ENCODE measurements at regions of chr1 and their contacts with region 1.

Region 1: DNA sequence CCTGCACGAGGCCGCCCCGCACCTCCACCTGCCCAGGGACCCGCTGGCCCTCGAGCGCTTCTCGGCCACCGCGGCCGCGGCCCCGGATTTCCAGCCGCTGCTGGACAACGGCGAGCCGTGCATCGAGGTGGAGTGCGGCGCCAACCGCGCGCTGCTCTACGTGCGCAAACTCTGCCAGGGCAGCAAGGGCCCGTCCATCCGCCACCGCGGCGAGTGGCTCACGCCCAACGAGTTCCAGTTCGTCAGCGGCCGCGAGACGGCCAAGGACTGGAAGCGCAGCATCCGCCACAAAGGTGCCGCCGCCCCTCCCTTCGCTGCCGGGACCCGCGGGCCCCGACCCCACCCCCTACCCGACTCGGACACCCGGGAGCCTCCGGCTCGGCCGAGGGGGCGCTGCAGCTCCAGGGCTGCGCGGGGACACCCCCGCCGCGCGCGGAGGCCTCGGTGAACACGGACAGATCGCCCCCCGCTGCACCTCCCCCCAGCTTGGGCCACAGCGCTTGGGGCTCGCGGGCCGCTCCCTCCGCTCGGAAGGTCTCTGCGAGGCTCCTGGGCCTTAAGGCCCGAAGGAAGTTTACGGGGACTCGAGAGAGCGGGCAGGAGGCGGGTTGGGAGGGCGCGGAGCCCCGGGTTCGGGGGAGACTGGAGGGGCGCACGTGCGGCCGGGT is 1.1 kb downstream of the SAMD11 start:
- DNase-seq: no peak
- ATAC-seq: no peak
- H3K4me3 ChIP-seq: peak overlapping the region; percentile 44
- H3K4me3 Mint-ChIP-seq: peak overlapping the region in 8 of 10 donors; percentile 8 to 72 (median 38)
- H3K27ac ChIP-seq: no peak overlapping the region
- H3K27ac Mint-ChIP-seq: no peak overlapping the region
- H3K4me1 ChIP-seq: peaks cover 7 to 21% of the 10 kb centered on the region in 2 donors
- H3K4me1 Mint-ChIP-seq: peaks cover 6 to 20% (median 15%) of the 10 kb centered on the region in 7 donors
- H3K27me3 ChIP-seq: peaks cover 7 to 27% of the 10 kb centered on the region in 2 donors
- H3K27me3 Mint-ChIP-seq: peaks cover 27 to 59% (median 37%) of the 10 kb centered on the region in 5 donors

Region 2: GRCh38 chr1:958823-959729 is 34.3 kb after region 1 on chr1 and contains the start of gene NOC2L:
- CTCF ChIA-PET with region 1: no interaction called
- POLR2A ChIA-PET with region 1: no interaction called
- intact Hi-C with region 1: loop called in 1 of 2 experiments (anchors 1 kb)
- DNase-seq: peak; percentile 84 to 97 (median 92)
- ATAC-seq: peak; percentile 96
- H3K4me3 ChIP-seq: peak within 1 kb of the TSS; percentile 87
- H3K4me3 Mint-ChIP-seq: peak within 1 kb of the TSS; percentile 83 to 95 (median 90)
- H3K27ac ChIP-seq: peak within 1 kb of the TSS; percentile 89
- H3K27ac Mint-ChIP-seq: peak within 1 kb of the TSS; percentile 48 to 85 (median 77)
- H3K4me1 ChIP-seq: peaks cover 8 to 12% of the 10 kb centered on the region in 2 donors
- H3K4me1 Mint-ChIP-seq: peaks cover 12 to 28% (median 21%) of the 10 kb centered on the region in 7 donors
- H3K27me3 ChIP-seq: no peaks in the 10 kb centered on the region
- H3K27me3 Mint-ChIP-seq: peaks cover 0 to 2% (median 0%) of the 10 kb centered on the region in 5 donors
- total RNA-seq, gene NOC2L: 46.6 to 88.3 (median 67.9) TPM

Region 3: GRCh38 chr1:1013105-1013921 is 88.5 kb after region 1 on chr1 and contains the start of gene ISG15:
- CTCF ChIA-PET with region 1: no interaction called
- POLR2A ChIA-PET with region 1: no interaction called
- intact Hi-C with region 1: no loop called
- DNase-seq: peak; percentile 73 to 90 (median 85)
- ATAC-seq: peak; percentile 98
- H3K4me3 ChIP-seq: peak within 1 kb of the TSS; percentile 95
- H3K4me3 Mint-ChIP-seq: peak within 1 kb of the TSS; percentile 89 to 100 (median 96)
- H3K27ac ChIP-seq: peak within 1 kb of the TSS; percentile 83
- H3K27ac Mint-ChIP-seq: peak within 1 kb of the TSS; percentile 96 to 100 (median 99)
- H3K4me1 ChIP-seq: peaks cover 13 to 18% of the 10 kb centered on the region in 2 donors
- H3K4me1 Mint-ChIP-seq: peaks cover 19 to 35% (median 29%) of the 10 kb centered on the region in 7 donors
- H3K27me3 ChIP-seq: no peaks in the 10 kb centered on the region
- H3K27me3 Mint-ChIP-seq: peaks cover 0 to 4% (median 1%) of the 10 kb centered on the region in 5 donors
- total RNA-seq, gene ISG15: 17.4 to 227 (median 25.4) TPM

Measured in naive thymus-derived CD4-positive, alpha-beta T cell (primary cell).